ENCODE measurements at regions of chr7 and their contacts with region 1.

Region 1: GRCh38 chr7:100369105-100369504 is 4.2 kb upstream of the PILRA start:
- DNase-seq: peak; percentile 56 to 70
- ATAC-seq: peak; percentile 76 to 89 (median 82)
- H3K4me3 ChIP-seq: no peak overlapping the region
- H3K4me3 Mint-ChIP-seq: peak overlapping the region; percentile 81
- H3K27ac ChIP-seq: peak overlapping the region; percentile 96
- H3K27ac Mint-ChIP-seq: peak overlapping the region; percentile 96
- H3K4me1 ChIP-seq: peaks cover 91% of the 10 kb centered on the region
- H3K4me1 Mint-ChIP-seq: peaks cover 55 to 72% of the 10 kb centered on the region in 2 donors
- H3K27me3 ChIP-seq: no peaks in the 10 kb centered on the region
- H3K27me3 Mint-ChIP-seq: no peaks in the 10 kb centered on the region
- CTCF ChIP-seq: no peak

Region 2: GRCh38 chr7:100088621-100089457 is 280.3 kb before region 1 on chr7 and contains the start of gene COPS6:
- intact Hi-C with region 1: no loop called
- DNase-seq: peak; percentile 89 to 91
- ATAC-seq: peak; percentile 78 to 91 (median 89)
- H3K4me3 ChIP-seq: peak within 1 kb of the TSS; percentile 95
- H3K4me3 Mint-ChIP-seq: peak within 1 kb of the TSS; percentile 86
- H3K27ac ChIP-seq: peak within 1 kb of the TSS; percentile 84
- H3K27ac Mint-ChIP-seq: peak within 1 kb of the TSS; percentile 79 to 88
- H3K4me1 ChIP-seq: peaks cover 14% of the 10 kb centered on the region
- H3K4me1 Mint-ChIP-seq: peaks cover 9 to 28% of the 10 kb centered on the region in 2 donors
- H3K27me3 ChIP-seq: no peaks in the 10 kb centered on the region
- H3K27me3 Mint-ChIP-seq: no peaks in the 10 kb centered on the region
- CTCF ChIP-seq: no peak
- total RNA-seq, gene COPS6: 79.0 to 94.6 (median 84.4) TPM

Region 3: DNA sequence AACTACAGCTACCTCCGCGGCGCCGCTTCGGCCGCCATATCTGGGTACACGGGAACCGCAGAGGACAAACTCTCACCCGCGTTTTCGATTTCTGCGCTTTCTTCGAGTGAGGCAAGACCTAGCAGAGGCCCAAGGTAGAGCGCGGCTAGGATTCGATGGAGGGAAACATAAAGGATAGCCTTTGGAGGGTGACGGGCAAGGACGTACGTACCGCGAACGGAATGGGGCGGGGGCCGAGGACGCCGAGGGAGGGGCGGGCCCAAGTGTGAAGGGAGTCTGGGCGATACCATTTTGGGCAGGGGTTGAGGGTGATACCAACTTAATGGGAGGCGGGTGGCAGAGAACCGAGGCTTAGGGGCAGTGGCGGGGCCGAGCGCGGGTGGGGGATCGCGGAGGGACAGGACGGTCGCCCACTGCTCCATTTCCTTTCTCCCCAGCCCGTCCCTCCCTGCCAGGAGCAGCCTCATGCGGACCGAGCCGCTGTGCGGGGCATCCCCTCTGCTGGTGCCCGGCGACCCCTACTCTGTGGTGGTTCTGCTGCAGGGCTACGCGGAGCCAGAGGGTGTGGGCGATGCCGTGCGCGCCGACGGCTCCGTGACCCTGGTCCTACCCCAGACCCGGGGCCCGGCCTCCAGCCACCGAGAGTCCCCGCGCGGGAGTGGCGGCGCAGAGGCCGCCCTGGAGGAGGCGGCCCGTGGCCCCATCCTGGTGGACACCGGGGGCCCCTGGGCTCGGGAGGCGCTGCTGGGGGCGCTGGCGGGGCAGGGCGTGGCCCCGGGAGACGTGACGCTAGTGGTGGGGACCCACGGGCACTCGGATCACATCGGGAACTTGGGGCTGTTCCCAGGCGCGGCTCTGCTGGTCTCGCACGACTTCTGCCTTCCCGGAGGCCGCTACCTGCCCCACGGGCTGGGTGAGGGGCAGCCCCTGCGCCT is 241.9 kb before region 1 on chr7 and contains the start of gene MBLAC1:
- intact Hi-C with region 1: no loop called
- DNase-seq: peak; percentile 87 to 97
- ATAC-seq: peak; percentile 89 to 97 (median 89)
- H3K4me3 ChIP-seq: peak within 1 kb of the TSS; percentile 88
- H3K4me3 Mint-ChIP-seq: peak within 1 kb of the TSS; percentile 98
- H3K27ac ChIP-seq: peak within 1 kb of the TSS; percentile 96
- H3K27ac Mint-ChIP-seq: peak within 1 kb of the TSS; percentile 98 to 99
- H3K4me1 ChIP-seq: peaks cover 34% of the 10 kb centered on the region
- H3K4me1 Mint-ChIP-seq: peaks cover 30 to 38% of the 10 kb centered on the region in 2 donors
- H3K27me3 ChIP-seq: no peaks in the 10 kb centered on the region
- H3K27me3 Mint-ChIP-seq: no peaks in the 10 kb centered on the region
- CTCF ChIP-seq: no peak
- total RNA-seq, gene MBLAC1: 2.8 to 4.3 (median 4.1) TPM

Region 4: GRCh38 chr7:100271716-100272537 is 97.2 kb before region 1 on chr7:
- intact Hi-C with region 1: no loop called
- DNase-seq: peak; percentile 96 to 98
- ATAC-seq: peak; percentile 90 to 95 (median 95)
- H3K4me3 ChIP-seq: peak overlapping the region; percentile 49
- H3K4me3 Mint-ChIP-seq: peak overlapping the region; percentile 84
- H3K27ac ChIP-seq: peak overlapping the region; percentile 50
- H3K27ac Mint-ChIP-seq: peak overlapping the region; percentile 34 to 76
- H3K4me1 ChIP-seq: peaks cover 16% of the 10 kb centered on the region
- H3K4me1 Mint-ChIP-seq: peaks cover 7 to 20% of the 10 kb centered on the region in 2 donors
- H3K27me3 ChIP-seq: no peaks in the 10 kb centered on the region
- H3K27me3 Mint-ChIP-seq: no peaks in the 10 kb centered on the region
- CTCF ChIP-seq: no peak

Region 5: DNA sequence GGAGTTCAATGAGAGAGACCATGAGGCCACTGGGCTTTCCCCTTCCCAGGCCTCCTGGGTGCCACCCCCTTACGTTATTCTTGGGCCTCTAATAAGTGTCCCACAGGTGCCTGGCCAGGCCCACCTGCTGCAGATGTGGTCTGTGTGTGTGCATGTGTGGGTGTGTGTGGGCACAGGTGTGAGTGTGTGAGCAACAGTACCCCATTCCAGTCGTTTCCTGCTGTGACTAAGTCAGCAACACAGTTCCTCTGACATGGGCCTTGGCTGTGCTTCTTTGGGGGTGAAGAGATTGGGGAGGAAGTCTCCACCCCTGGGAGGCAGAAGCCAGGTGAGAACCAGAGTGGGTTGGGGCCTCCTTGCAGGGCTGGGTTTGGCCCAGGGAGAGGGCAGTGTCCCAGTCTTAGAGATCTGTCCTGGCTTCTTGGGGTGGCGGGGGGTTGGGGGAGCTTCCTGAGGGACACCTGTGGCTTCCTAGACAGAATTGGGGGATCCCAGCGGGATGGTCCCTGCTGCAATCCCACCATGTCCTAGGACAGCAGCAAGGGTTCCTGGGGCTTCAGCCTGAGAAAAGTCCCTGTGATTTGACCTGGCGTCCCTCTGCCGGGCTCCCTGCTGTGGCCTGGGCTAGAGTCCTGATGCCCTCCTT is 15.3 kb before region 1 on chr7:
- intact Hi-C with region 1: loop called (anchors 2 kb)
- DNase-seq: peak; percentile 44 to 54
- ATAC-seq: peak; percentile 19 to 43 (median 25)
- H3K4me3 ChIP-seq: peak overlapping the region; percentile 70
- H3K4me3 Mint-ChIP-seq: peak overlapping the region; percentile 95
- H3K27ac ChIP-seq: peak overlapping the region; percentile 66
- H3K27ac Mint-ChIP-seq: peak overlapping the region; percentile 92 to 98
- H3K4me1 ChIP-seq: peaks cover 64% of the 10 kb centered on the region
- H3K4me1 Mint-ChIP-seq: peaks cover 28 to 62% of the 10 kb centered on the region in 2 donors
- H3K27me3 ChIP-seq: no peaks in the 10 kb centered on the region
- H3K27me3 Mint-ChIP-seq: no peaks in the 10 kb centered on the region
- CTCF ChIP-seq: no peak

Region 6: DNA sequence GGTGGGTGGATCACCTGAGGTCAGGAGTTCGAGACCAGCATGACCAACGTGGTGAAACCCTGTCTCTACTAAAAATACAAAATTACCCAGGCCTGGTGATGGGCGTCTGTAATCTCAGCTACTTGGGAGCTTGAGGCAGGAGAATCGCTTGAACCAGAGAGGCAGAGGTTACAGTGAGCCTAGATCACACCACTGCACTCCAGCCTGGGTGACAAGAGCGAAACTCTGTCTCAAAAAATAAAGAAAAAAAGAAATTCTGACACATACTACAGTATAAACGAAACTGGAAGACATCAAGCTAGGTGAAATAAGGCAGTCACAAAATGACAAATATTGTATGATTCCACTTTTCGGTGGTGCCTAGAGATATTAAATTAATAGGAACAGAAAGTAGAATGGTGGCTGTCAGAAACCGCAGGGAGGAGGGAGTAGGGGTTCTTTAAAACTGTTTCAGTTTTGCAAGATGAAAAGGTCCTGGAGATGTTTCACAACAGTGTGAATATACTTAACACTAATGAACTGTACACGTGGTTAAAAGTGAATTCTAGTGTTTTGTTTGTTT is 27.4 kb after region 1 on chr7:
- intact Hi-C with region 1: loop called (anchors 5 kb)
- DNase-seq: peak in 1 of 2 donors; percentile 70
- ATAC-seq: peak; percentile 90 to 94 (median 91)
- H3K4me3 ChIP-seq: no peak overlapping the region
- H3K4me3 Mint-ChIP-seq: peak overlapping the region; percentile 93
- H3K27ac ChIP-seq: peak overlapping the region; percentile 65
- H3K27ac Mint-ChIP-seq: peak overlapping the region; percentile 94 to 98
- H3K4me1 ChIP-seq: peaks cover 22% of the 10 kb centered on the region
- H3K4me1 Mint-ChIP-seq: peaks cover 22 to 28% of the 10 kb centered on the region in 2 donors
- H3K27me3 ChIP-seq: no peaks in the 10 kb centered on the region
- H3K27me3 Mint-ChIP-seq: no peaks in the 10 kb centered on the region
- CTCF ChIP-seq: no peak

Measured in natural killer cell (primary cell).